Heart right ventricle (tissue), 16 donors: ENCODE measurements at regions of chr16 and their contacts with region 1.

Region 1: DNA sequence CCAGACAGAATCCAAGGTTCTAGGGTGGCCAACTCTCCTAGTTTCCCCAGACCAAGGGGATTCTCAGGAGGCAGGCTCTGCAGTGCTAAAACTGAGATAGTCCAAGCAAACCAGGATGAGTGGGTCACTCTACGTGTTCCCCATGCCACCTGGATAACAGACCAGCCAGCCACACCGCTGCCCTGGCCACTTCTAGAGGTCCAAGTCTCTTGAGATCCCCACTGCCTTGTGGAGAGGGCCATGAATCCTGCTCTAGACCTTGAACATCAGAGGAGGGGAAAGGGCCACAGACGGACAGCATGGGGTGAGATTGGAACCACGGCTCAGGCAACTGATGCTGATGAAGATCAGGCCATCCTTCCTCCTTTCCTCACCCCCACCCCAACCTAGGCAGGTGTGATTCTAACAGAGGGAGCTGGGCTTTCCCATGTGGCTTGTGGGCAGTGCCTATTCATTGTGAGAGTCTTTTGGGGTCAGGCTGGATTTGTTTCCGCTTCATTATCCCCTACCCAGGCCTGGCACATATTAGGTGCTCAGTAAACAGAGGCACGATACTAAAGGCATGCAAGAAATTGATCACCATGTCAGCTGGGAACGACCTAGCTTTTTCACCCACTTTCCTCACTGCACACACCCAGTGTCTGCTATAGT is 16.8 kb upstream of the TVP23A start:
- DNase-seq: no peak
- ATAC-seq: no peak
- H3K4me3 ChIP-seq: no peak overlapping the region
- H3K27ac ChIP-seq: no peak overlapping the region
- H3K4me1 ChIP-seq: peaks cover 0 to 20% (median 1%) of the 10 kb centered on the region in 9 donors
- H3K27me3 ChIP-seq: peaks cover 0 to 8% (median 0%) of the 10 kb centered on the region in 7 donors
- CTCF ChIP-seq: no peak

Region 2: GRCh38 chr16:10871149-10871991 is 36.0 kb after region 1 on chr16:
- intact Hi-C with region 1: loop called in 3 of 10 experiments (anchors 2 to 5 kb)
- DNase-seq: peak; percentile 24 to 40
- ATAC-seq: peak; percentile 30 to 76 (median 66)
- H3K4me3 ChIP-seq: peak overlapping the region in 1 of 10 donors; percentile 16
- H3K27ac ChIP-seq: peak overlapping the region in 9 of 10 donors; percentile 27 to 90 (median 65)
- H3K4me1 ChIP-seq: peaks cover 0 to 75% (median 49%) of the 10 kb centered on the region in 9 donors
- H3K27me3 ChIP-seq: peaks cover 0 to 16% (median 0%) of the 10 kb centered on the region in 7 donors
- CTCF ChIP-seq: no peak